Activated CD8-positive, alpha-beta T cell treated with anti-CD3 and anti-CD28 coated beads for 36 hours (primary cell): ENCODE measurements at regions of chr10 and their contacts with region 1.

Region 1: GRCh38 chr10:122374237-122374869 is at the start of gene PLEKHA1:
- DNase-seq: peak; percentile 93
- ATAC-seq: peak; percentile 86
- H3K4me3 Mint-ChIP-seq: peak within 1 kb of the TSS; percentile 94
- H3K27ac Mint-ChIP-seq: peak within 1 kb of the TSS; percentile 98
- H3K4me1 Mint-ChIP-seq: peaks cover 41% of the 10 kb centered on the region
- H3K27me3 Mint-ChIP-seq: peaks cover 11% of the 10 kb centered on the region
- CTCF ChIP-seq: no peak
- total RNA-seq, gene PLEKHA1: 17.0 to 17.4 TPM

Region 2: GRCh38 chr10:122388287-122388997 is 14.1 kb after region 1 on chr10:
- CTCF ChIA-PET with region 1: interaction called, 6 read pairs
- POLR2A ChIA-PET with region 1: interaction called, 7 read pairs
- intact Hi-C with region 1: loop called (anchors 1 kb)
- DNase-seq: peak; percentile 74
- ATAC-seq: peak; percentile 74
- H3K4me3 Mint-ChIP-seq: no peak overlapping the region
- H3K27ac Mint-ChIP-seq: peak overlapping the region; percentile 35
- H3K4me1 Mint-ChIP-seq: peaks cover 50% of the 10 kb centered on the region
- H3K27me3 Mint-ChIP-seq: no peaks in the 10 kb centered on the region
- CTCF ChIP-seq: no peak

Region 3: GRCh38 chr10:122419876-122420623 is 45.7 kb after region 1 on chr10:
- CTCF ChIA-PET with region 1: interaction called, 5 read pairs
- POLR2A ChIA-PET with region 1: interaction called, 9 read pairs
- intact Hi-C with region 1: loop called (anchors 2 kb)
- DNase-seq: no peak
- ATAC-seq: no peak
- H3K4me3 Mint-ChIP-seq: no peak overlapping the region
- H3K27ac Mint-ChIP-seq: no peak overlapping the region
- H3K4me1 Mint-ChIP-seq: peaks cover 78% of the 10 kb centered on the region
- H3K27me3 Mint-ChIP-seq: no peaks in the 10 kb centered on the region
- CTCF ChIP-seq: no peak

Region 4: DNA sequence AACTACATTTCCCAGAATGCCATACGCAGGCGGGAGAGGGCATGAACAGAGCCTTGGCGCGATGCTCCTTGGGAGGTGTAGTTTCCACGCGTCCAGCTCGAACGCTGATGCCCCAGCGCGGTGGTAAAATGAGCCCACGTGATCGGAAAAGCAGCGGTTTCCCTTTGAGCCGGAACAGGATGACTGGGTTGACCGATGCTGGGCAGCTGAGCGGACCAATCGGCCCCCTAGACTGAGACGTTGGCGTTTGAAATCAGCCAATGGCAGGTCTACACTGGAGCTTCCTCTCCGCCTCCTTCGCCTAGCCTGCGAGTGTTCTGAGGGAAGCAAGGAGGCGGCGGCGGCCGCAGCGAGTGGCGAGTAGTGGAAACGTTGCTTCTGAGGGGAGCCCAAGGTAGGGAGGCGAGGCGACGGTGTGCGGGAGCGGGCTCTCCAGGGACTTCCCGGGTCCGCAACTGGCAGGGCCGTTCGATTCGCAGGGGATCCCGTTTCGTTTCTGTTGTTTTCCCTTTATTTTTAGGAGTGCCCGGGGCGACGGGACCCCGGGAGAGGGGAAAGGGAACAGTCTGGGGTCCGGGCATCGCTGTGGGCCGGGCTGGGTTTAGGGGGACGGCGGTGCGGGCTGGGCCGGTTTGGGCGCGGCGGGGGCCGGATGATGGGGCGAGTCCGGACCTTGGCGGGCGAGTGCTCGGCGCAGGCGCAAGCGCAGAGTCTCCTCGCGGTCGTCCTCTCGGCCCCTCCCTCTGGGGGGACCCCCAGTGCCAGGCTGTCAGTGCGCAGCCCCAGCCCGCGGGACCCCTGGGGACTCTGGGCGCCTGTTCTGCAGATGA is 780.0 kb after region 1 on chr10 and contains the start of gene BUB3:
- CTCF ChIA-PET with region 1: no interaction called
- POLR2A ChIA-PET with region 1: no interaction called
- intact Hi-C with region 1: loop called (anchors 10 kb)
- DNase-seq: peak; percentile 98
- ATAC-seq: peak; percentile 89
- H3K4me3 Mint-ChIP-seq: peak within 1 kb of the TSS; percentile 93
- H3K27ac Mint-ChIP-seq: peak within 1 kb of the TSS; percentile 100
- H3K4me1 Mint-ChIP-seq: peaks cover 61% of the 10 kb centered on the region
- H3K27me3 Mint-ChIP-seq: peaks cover 14% of the 10 kb centered on the region
- CTCF ChIP-seq: no peak
- total RNA-seq, gene BUB3: 256 to 273 TPM